H1 (cell line): ENCODE measurements at regions of chr2 and their contacts with region 1.

Region 1: DNA sequence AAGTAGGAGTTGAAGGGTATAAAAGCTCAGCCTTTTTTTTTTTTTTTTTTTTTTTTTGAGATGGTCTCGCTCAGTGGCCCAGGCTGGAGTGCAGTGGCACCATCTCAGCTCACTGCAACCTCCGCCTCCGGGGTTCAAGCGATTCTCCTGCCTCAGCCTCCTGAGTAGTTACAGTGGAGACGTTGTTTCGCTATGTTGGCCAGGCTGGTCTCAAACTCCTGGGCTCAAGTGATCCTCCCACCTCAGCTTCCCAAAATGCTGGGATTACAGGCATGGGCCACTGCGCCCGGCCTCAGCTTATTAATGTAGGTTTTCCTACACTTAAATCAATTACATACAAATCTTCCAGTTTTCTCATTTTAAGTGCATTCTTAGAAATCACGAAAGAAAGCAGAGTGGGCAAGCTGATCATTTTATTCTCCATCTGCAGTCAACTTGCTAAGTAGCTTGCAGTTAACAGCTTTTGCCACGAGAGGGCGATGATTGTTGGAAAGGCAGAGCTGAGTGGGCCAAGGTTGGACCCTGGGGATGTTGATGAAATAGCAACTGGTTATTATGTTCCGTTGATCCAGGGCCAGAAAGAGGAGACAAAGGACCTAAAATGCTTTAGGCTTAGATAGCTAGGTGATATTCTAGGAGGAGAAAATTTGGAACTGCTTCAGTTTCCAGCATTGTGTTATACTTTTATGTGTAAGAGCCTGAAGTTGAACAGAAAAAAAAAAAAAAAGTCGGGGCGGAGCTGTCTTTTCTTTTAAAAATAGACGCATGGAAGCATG is 234.4 kb upstream of the EPAS1 start:
- DNase-seq: peak; percentile 33 to 87
- H3K4me3 ChIP-seq: no peak overlapping the region
- H3K27ac ChIP-seq: no peak overlapping the region
- H3K4me1 ChIP-seq: no peaks in the 10 kb centered on the region; a peak in 1 of 7 replicates
- H3K27me3 ChIP-seq: no peaks in the 10 kb centered on the region
- CTCF ChIP-seq: peak; percentile 52 to 90 (median 84)
- EP300 ChIP-seq: no peak
- POLR2A ChIP-seq: no peak
- RAD21 ChIP-seq: peak; percentile 78 to 86

Region 2: GRCh38 chr2:45533771-45534170 is 529.1 kb before region 1 on chr2:
- CTCF ChIA-PET with region 1: no interaction called
- POLR2A ChIA-PET with region 1: no interaction called
- DNase-seq: no peak
- H3K4me3 ChIP-seq: no peak overlapping the region
- H3K27ac ChIP-seq: no peak overlapping the region
- H3K4me1 ChIP-seq: no peaks in the 10 kb centered on the region
- H3K27me3 ChIP-seq: no peaks in the 10 kb centered on the region
- CTCF ChIP-seq: no peak
- EP300 ChIP-seq: no peak
- POLR2A ChIP-seq: no peak
- RAD21 ChIP-seq: no peak

Region 3: DNA sequence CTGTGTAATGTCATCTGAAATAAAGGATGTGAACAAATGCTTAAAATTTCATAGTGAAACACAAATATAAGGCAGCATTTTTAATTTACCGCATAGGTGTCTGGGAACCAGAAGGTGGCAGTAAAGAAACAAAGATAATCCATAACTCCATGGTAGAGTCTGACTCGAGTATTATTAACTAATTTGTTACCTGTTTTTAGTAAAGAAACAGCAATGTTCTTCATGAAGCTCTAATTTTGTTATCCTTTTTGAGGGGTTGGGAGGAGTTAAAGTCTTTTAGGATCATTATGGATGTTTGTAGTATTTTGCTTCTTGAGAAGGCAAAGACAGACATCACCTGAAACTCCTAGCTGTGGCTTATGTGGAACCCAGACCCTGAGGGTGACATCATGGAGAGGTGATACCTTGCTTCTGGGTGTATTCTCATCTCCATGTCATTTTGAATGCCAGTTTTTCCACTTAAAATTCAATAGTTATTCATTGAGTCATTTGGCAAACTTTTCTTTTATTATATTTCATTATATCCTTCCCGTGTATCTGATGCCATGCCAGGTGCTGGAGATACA is 51.8 kb before region 1 on chr2:
- CTCF ChIA-PET with region 1: interaction called, 25 read pairs
- POLR2A ChIA-PET with region 1: no interaction called
- DNase-seq: peak in 1 of 2 experiments; percentile 14
- H3K4me3 ChIP-seq: no peak overlapping the region
- H3K27ac ChIP-seq: no peak overlapping the region
- H3K4me1 ChIP-seq: peaks cover 3 to 9% (median 5%) of the 10 kb centered on the region in 4 experiments; a peak in 6 of 7 replicates
- H3K27me3 ChIP-seq: no peaks in the 10 kb centered on the region
- CTCF ChIP-seq: peak in 2 of 3 experiments; percentile 38 to 53; a peak in 2 of 4 replicates
- EP300 ChIP-seq: no peak
- POLR2A ChIP-seq: no peak
- RAD21 ChIP-seq: peak; percentile 66 to 71

Region 4: GRCh38 chr2:46050489-46050888 is 12.3 kb before region 1 on chr2:
- CTCF ChIA-PET with region 1: interaction called, 29 read pairs
- POLR2A ChIA-PET with region 1: no interaction called
- DNase-seq: no peak
- H3K4me3 ChIP-seq: no peak overlapping the region
- H3K27ac ChIP-seq: no peak overlapping the region
- H3K4me1 ChIP-seq: no peaks in the 10 kb centered on the region
- H3K27me3 ChIP-seq: no peaks in the 10 kb centered on the region
- CTCF ChIP-seq: peak in 2 of 3 experiments; percentile 24 to 42; a peak in 2 of 4 replicates
- EP300 ChIP-seq: no peak
- POLR2A ChIP-seq: no peak
- RAD21 ChIP-seq: peak; percentile 15 to 34; a peak in 2 of 4 replicates

Region 5: DNA sequence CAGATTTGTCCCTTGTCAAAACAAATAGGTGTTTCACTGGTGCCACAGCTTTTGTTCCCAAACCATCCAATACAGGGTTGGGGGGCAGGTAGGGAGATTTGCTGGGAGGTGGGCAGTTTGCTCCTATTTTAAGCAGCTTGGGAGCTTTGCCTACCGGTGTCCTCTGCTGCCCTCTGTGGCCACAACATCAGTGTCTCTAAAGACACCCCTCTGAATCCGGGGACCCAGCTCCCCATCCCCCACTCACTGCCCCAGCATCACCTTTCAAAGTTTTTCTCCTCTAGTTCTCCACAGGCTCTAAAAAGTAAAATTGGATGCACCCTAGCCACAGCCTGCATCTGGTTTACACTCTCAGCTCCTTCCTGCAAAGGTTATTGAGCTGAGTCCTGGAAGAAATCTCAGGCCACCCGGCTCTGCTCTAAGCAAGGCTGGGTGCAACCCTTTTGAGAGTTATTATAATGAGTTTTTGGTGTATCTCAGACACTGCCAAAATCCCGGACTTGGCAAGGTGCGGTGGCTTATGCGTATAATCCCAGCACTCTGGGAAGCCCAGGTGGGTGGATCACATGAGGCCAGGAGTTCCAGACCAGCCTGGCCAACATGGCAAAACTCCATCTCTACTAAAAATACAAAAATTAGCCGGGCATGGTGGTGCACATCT is 231.5 kb after region 1 on chr2:
- CTCF ChIA-PET with region 1: interaction called, 12 read pairs
- POLR2A ChIA-PET with region 1: no interaction called
- DNase-seq: peak in 1 of 2 experiments; percentile 71
- H3K4me3 ChIP-seq: no peak overlapping the region
- H3K27ac ChIP-seq: no peak overlapping the region
- H3K4me1 ChIP-seq: peaks cover 0 to 10% (median 7%) of the 10 kb centered on the region in 4 experiments; a peak in 4 of 7 replicates
- H3K27me3 ChIP-seq: peaks cover 30 to 45% (median 39%) of the 10 kb centered on the region in 4 experiments
- CTCF ChIP-seq: peak; percentile 70 to 73 (median 72)
- EP300 ChIP-seq: no peak
- POLR2A ChIP-seq: no peak
- RAD21 ChIP-seq: peak; percentile 76 to 79

Region 6: DNA sequence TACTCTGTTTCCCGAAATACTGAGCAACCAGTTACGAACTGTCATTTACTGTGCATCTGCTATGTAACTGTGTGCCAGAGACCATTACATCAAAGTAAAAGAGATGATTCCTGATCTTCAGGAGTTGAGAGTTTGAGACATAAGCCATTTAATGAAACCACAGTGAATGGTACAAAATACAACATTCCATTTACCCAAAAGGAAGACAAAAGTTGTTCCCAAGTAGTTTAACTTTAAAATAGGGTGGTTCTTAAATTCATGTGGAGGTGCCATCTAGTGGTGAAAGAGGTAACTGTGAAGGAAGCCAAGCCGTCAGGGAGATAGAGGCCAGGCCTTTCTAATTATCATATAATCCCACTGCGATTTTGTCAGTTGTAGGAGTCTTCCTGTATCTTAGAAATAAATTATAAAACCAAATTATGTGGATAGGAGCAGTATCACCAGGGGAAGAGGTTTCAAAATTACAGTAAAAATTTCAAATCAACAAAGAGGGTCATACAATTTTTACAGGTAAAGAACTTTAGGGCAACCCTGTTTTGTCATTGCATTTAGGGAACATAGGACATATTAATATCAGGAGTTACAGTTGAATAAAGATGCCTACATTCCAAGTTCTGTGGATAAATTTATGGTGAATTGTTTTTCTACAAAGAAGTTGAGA is 302.1 kb after region 1 on chr2:
- CTCF ChIA-PET with region 1: interaction called, 25 read pairs
- POLR2A ChIA-PET with region 1: no interaction called
- DNase-seq: no peak
- H3K4me3 ChIP-seq: no peak overlapping the region
- H3K27ac ChIP-seq: no peak overlapping the region
- H3K4me1 ChIP-seq: no peaks in the 10 kb centered on the region
- H3K27me3 ChIP-seq: no peaks in the 10 kb centered on the region
- CTCF ChIP-seq: peak in 2 of 3 experiments; percentile 67 to 77; a peak in 3 of 4 replicates
- EP300 ChIP-seq: no peak
- POLR2A ChIP-seq: no peak
- RAD21 ChIP-seq: peak; percentile 72 to 77

Region 7: DNA sequence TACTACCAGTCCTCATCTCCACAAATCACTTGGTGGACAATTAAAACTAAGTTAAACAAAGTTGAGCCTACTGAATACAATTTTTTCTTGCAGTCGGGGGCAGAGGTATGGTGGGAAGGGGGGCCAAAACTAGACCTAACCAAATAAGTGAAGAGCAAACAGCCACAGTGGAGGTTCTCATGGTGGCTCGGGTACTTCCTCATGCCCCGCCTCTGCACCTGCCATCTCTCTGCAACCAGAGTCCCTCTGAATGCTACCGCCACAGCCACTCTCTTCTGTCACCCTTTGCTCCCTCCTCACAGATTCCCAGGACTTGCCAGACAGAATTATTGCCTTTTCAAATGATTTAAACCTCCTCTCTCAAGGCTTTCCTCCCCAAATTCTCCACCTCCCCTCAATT is 620.7 kb after region 1 on chr2:
- CTCF ChIA-PET with region 1: no interaction called
- POLR2A ChIA-PET with region 1: no interaction called
- DNase-seq: no peak
- H3K4me3 ChIP-seq: no peak overlapping the region
- H3K27ac ChIP-seq: no peak overlapping the region
- H3K4me1 ChIP-seq: no peaks in the 10 kb centered on the region
- H3K27me3 ChIP-seq: no peaks in the 10 kb centered on the region
- CTCF ChIP-seq: no peak
- EP300 ChIP-seq: no peak
- POLR2A ChIP-seq: no peak
- RAD21 ChIP-seq: no peak